ENCODE measurements at regions of chr2 and their contacts with region 1.

Region 1: GRCh38 chr2:162301151-162301804 is 17.2 kb downstream of the IFIH1 start:
- DNase-seq: peak in 1 of 2 donors; percentile 21
- ATAC-seq: peak in 6 of 8 donors; percentile 20 to 66 (median 57)
- H3K4me3 ChIP-seq: no peak overlapping the region
- H3K27ac ChIP-seq: no peak overlapping the region
- H3K4me1 ChIP-seq: peaks cover 0 to 7% (median 0%) of the 10 kb centered on the region in 9 donors
- H3K27me3 ChIP-seq: no peaks in the 10 kb centered on the region
- CTCF ChIP-seq: peak; percentile 80 to 91 (median 86)

Region 2: DNA sequence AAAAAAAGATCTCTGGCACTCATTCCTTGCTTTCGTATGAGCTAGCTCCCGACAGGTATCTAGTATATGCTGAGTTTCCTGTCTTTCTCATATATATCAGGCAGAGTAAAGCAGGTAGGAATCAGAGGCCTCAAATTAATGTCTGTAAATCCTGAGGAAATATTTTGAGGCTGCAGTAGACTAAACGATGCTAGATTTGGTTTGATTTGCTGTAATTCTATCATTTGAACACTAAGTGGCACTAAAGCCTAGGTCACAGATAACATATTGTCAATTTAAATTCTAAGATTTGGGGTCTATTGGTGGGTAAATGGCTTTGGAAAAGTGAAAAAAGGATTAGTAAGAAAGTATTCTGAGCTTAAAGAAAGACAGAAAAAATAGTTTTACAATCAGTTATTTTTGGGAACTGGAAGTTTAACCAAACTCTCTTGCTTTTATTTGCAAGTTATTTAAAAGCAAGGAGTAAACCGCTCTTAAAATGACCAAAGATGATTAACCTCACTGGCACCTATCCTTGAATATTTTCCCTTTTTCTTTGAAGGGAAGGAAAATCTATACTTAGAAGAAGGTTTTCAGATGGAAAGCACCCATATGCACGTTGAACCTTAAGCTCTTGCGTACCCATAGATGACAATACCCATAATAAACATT is 714.6 kb before region 1 on chr2:
- intact Hi-C with region 1: loop called in 7 of 10 experiments (anchors 5 to 10 kb)
- DNase-seq: no peak
- ATAC-seq: no peak
- H3K4me3 ChIP-seq: no peak overlapping the region
- H3K27ac ChIP-seq: no peak overlapping the region
- H3K4me1 ChIP-seq: no peaks in the 10 kb centered on the region
- H3K27me3 ChIP-seq: peaks cover 0 to 6% (median 0%) of the 10 kb centered on the region in 7 donors
- CTCF ChIP-seq: peak; percentile 16 to 73 (median 54)

Region 3: DNA sequence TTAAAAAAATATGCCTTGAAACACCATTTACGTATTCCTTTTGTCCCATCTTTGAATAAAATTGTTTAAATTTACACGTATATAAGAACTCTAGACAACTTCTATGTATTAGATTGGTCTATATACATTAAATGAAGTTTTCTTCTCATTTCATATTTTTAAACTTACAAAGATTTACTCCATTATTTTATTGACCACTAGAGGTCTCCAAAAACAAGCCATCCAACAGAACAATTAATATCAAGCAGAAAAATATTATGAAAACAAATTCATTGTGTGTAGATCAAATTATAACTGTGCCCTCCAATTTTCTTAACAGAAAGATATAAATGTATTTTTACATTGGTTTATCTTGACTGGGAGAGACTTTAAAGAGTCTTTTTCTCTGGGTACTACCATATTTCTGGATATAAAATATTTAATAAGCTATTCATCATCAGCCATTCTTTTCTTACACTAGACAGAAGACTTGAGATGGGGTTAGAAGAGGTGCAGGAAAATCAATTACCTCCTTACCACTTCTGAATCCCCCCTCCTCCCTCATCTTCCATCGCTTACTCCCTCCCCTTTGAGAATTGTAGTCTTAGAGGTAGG is 293.7 kb before region 1 on chr2:
- intact Hi-C with region 1: loop called in 3 of 10 experiments (anchors 5 to 10 kb)
- DNase-seq: no peak
- ATAC-seq: no peak
- H3K4me3 ChIP-seq: no peak overlapping the region
- H3K27ac ChIP-seq: no peak overlapping the region
- H3K4me1 ChIP-seq: peaks cover 0 to 5% (median 0%) of the 10 kb centered on the region in 9 donors
- H3K27me3 ChIP-seq: no peaks in the 10 kb centered on the region
- CTCF ChIP-seq: peak; percentile 57 to 86 (median 76)

Region 4: DNA sequence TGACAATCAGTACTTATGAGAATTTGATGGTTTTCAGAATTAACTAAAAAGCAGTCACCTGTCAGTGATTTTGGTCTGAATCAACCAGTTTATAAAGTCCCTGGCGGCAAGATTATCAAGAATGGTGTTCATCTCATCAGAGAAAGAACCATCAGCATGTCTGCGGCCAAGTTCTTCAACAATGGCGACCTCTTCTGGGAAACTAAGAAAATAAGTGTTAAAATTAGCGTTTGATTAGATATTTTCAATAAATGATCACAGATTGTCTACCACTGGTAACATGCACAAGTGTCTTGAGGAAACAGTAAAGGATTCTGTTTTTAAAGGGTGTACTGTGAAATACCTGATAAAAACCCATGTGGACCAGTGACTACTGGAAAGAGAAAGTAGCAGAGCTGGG is 157.3 kb before region 1 on chr2:
- intact Hi-C with region 1: loop called in 1 of 10 experiments (anchors 10 kb)
- DNase-seq: no peak
- ATAC-seq: no peak
- H3K4me3 ChIP-seq: no peak overlapping the region
- H3K27ac ChIP-seq: no peak overlapping the region
- H3K4me1 ChIP-seq: no peaks in the 10 kb centered on the region
- H3K27me3 ChIP-seq: peaks cover 0 to 5% (median 0%) of the 10 kb centered on the region in 7 donors
- CTCF ChIP-seq: no peak

Region 5: DNA sequence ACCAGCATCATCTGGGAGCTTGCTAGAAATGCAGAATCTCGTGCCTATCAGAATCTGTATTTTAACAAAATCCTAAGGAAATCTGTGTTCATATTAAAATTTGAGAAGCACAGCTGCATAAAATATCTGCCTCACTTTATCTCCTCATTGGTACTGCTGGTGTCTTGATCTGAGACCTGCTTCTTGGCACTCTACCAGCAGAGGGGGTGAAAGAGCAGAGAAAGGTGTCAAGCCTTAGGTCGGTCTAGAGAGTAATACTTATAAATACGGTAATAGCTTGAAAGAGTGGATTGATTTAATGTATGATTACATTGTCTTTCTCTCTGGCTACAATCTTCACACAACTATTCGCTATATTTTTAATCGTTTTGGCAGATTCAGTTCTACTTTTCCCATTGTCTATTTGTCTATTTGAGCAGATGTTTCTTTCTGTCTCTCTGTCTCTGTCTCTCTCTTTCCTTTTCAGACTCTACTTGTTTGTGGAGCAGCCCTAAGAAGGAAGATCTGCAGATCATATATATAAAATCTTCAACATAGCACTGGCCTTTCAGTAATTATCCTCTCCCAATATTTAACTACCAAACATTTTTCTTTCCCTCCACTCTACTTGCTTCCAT is 147.6 kb before region 1 on chr2:
- intact Hi-C with region 1: loop called in 6 of 10 experiments (anchors 5 to 10 kb)
- DNase-seq: peak in 1 of 2 donors; percentile 25
- ATAC-seq: peak in 1 of 8 donors; percentile 52
- H3K4me3 ChIP-seq: no peak overlapping the region
- H3K27ac ChIP-seq: no peak overlapping the region
- H3K4me1 ChIP-seq: no peaks in the 10 kb centered on the region
- H3K27me3 ChIP-seq: peaks cover 0 to 7% (median 0%) of the 10 kb centered on the region in 7 donors
- CTCF ChIP-seq: peak in 7 of 9 donors; percentile 26 to 68 (median 49)

Region 6: GRCh38 chr2:162221064-162221463 is 80.2 kb before region 1 on chr2:
- intact Hi-C with region 1: loop called in 9 of 10 experiments (anchors 1 to 5 kb)
- DNase-seq: peak; percentile 46 to 69
- ATAC-seq: peak in 7 of 8 donors; percentile 43 to 89 (median 76)
- H3K4me3 ChIP-seq: no peak overlapping the region
- H3K27ac ChIP-seq: no peak overlapping the region
- H3K4me1 ChIP-seq: peaks cover 0 to 10% (median 0%) of the 10 kb centered on the region in 9 donors
- H3K27me3 ChIP-seq: no peaks in the 10 kb centered on the region
- CTCF ChIP-seq: peak; percentile 61 to 91 (median 81)